ENCODE measurements at regions of chr5 and their contacts with region 1.

Region 1: DNA sequence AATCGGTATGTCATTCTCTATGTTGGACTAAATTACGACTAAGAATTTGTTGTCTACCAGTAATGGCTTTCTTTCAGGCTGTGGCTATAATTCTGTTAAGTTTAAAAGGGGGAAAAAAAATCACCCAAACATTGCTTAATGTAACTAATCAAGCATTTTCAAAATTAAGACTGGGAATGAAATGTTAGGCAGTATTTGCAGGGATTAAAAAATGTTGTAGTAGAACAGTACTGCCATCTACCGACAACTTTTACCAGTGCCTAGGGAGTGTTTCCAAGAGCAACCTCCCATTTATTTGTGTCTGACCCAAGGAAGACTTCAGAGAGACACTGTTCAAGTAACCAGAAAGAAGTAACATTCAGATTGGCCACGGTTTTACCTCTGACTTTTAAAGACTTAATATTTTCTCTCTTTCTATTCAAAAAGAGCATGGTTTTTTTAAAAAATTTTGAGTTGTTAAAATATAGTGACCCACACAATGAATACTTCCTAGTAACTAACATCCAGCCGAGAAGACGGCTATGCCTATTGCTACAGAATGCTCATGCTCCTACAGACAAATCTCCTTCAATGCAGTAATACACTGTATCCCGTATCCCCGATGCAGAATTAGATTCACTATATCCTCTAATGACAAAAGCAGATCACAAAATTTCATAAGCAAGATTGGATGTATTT is 92.4 kb downstream of the ARL15 start:
- ATAC-seq: peak; percentile 54 to 89 (median 78)
- H3K4me3 ChIP-seq: no peak overlapping the region
- H3K27ac ChIP-seq: no peak overlapping the region
- H3K4me1 ChIP-seq: peaks cover 10 to 19% of the 10 kb centered on the region in 2 donors

Region 2: GRCh38 chr5:53170748-53171349 is 1047.1 kb before region 1 on chr5:
- in situ Hi-C with region 1: loop called in 2 of 9 experiments (anchors 25 kb)
- ATAC-seq: peak in 3 of 8 experiments; percentile 44 to 55 (median 49)
- H3K4me3 ChIP-seq: no peak overlapping the region
- H3K27ac ChIP-seq: no peak overlapping the region
- H3K4me1 ChIP-seq: no peaks in the 10 kb centered on the region

Region 3: GRCh38 chr5:53194086-53194485 is 1023.9 kb before region 1 on chr5:
- in situ Hi-C with region 1: loop called in 1 of 9 experiments (anchors 25 kb)
- ATAC-seq: no peak
- H3K4me3 ChIP-seq: no peak overlapping the region
- H3K27ac ChIP-seq: no peak overlapping the region
- H3K4me1 ChIP-seq: peaks cover 0 to 3% of the 10 kb centered on the region in 2 donors

Region 4: GRCh38 chr5:53262348-53262970 is 955.5 kb before region 1 on chr5:
- in situ Hi-C with region 1: loop called in 1 of 9 experiments (anchors 10 kb)
- ATAC-seq: peak in 2 of 8 experiments; percentile 35 to 57
- H3K4me3 ChIP-seq: no peak overlapping the region
- H3K27ac ChIP-seq: no peak overlapping the region
- H3K4me1 ChIP-seq: no peaks in the 10 kb centered on the region

Region 5: DNA sequence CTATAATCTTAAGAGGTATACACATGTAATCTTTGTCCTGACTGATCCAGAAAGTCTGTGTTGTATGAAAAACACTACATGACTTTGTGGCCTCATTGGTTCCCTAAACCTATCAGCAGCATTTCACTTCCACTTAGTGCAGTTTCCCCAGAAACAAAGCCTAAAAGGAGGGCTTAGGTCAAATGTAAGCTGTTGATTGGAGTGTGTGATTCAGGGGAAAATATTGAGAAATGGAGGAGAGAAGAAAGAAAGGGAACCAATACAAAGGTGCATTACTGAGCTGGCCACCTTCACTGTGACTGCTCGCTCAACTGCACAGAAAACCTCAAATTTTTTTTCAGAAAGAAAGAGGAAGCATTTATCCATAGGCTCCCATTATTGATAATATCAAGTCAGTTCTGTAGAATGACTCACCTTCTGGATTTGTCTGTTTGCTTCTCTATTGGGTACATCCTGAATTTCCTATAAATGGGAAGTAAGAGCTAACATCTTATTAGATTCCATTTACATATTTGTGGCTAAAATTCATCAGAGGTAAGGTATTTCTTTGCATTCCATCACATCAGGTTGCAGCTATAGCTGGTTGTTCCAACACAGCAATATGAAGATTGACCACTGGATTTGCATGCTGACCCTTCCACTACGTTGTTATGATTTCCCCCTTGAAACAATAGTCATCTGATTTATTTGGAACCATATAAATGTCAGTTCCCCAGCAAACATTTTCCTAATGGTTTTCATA is 747.8 kb before region 1 on chr5:
- in situ Hi-C with region 1: loop called in 3 of 9 experiments (anchors 25 kb)
- ATAC-seq: no peak
- H3K4me3 ChIP-seq: no peak overlapping the region
- H3K27ac ChIP-seq: no peak overlapping the region
- H3K4me1 ChIP-seq: no peaks in the 10 kb centered on the region

Region 6: DNA sequence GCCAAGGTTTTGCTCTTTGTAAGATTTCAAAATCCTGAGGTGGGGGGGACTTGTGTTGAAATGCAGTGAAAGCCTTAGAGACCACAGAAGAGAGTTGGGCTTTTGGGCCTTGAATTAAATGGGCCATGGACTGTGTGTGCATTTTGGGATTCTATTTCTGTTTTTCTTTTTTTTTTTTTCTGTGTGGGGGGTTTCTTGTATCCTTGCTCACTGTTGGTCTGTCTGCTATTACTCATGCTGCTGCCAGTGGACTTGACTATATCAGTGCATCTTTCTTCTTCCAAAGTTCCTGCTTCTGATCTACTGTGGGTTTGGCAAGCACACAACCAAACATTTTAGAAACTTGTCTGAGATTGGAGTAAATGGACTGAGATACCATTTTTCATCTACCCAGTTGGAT is 252.5 kb before region 1 on chr5:
- in situ Hi-C with region 1: no loop called
- ATAC-seq: no peak
- H3K4me3 ChIP-seq: no peak overlapping the region
- H3K27ac ChIP-seq: no peak overlapping the region
- H3K4me1 ChIP-seq: no peaks in the 10 kb centered on the region

Region 7: DNA sequence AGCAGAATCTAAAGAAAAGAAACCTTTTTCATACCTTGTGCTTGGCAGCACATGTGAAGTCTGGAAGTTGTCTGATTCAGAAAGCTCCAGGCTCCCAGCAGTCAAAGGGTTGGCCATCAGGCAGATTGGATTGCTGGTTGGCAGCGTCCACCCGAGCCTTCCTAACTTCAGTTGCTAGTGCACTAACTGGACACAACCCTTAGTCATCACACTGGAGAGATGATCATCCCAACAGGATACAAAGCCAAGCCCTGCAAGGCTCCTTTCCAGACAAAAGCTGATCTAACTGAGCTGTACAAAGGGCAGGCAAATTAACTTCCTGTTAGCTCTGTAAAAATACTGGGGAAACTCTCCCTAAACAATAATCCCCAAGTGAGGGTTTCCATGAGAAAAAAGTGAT is 485.2 kb after region 1 on chr5:
- in situ Hi-C with region 1: no loop called
- ATAC-seq: peak in 7 of 8 experiments; percentile 58 to 68 (median 62)
- H3K4me3 ChIP-seq: no peak overlapping the region
- H3K27ac ChIP-seq: no peak overlapping the region
- H3K4me1 ChIP-seq: peaks cover 0 to 10% of the 10 kb centered on the region in 2 donors

Measured in motor neuron (in vitro differentiated cells).